H1 (cell line): ENCODE measurements at regions of chr3 and their contacts with region 1.

Region 1: DNA sequence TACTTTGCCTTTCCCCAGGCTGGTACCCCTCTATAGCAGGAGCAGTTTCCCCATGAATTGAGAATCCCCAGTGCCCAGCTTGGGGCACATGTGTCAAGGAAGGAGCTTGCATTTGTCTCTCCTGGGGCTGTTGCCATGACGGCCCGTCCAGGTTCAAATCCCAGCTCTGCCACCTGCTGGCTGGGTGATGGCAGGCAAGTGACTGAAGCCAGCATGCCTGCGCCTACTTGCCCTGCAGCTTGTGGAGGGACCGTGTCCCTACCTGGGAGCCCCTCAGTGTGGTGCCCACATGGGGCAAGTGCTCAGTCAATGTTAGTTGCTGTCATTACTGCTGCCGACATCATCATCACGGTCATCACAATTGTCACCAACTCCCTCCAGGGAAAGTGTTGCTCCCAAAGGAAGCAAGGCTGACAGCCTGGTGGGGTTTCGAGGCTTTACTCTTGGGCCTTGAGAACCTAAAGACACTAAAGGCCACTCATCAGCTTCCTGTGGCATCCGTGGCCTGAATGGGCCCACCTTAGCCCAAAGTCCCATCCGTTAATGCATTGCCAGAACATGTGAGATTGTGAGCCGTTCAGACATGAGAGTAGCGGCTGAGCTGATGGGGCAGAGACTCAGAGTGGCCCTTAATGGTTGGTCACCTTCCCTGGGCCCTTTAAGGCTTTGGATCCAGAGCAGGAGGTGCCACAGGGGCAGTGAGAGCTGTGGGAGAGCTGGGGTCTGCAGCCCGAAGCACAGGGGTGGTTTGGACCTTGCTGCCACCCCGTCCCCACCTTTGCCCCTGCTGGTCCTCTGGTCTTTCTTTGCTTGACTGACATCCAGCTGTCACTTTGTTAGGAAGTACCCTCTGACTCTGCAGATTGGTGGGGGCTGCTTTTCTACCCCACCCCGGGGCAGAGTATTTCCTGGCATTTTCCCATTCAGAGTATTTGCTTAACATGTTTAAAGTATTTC is 144.3 kb downstream of the DNAJB8 start:
- DNase-seq: peak; percentile 17 to 85
- H3K4me3 ChIP-seq: no peak overlapping the region
- H3K27ac ChIP-seq: no peak overlapping the region
- H3K4me1 ChIP-seq: peaks cover 0 to 4% (median 0%) of the 10 kb centered on the region in 4 experiments; a peak in 2 of 7 replicates
- H3K27me3 ChIP-seq: no peaks in the 10 kb centered on the region
- CTCF ChIP-seq: peak in 2 of 3 experiments; percentile 89 to 90; a peak in 3 of 4 replicates
- EP300 ChIP-seq: no peak
- POLR2A ChIP-seq: no peak
- RAD21 ChIP-seq: peak; percentile 76 to 86

Region 2: DNA sequence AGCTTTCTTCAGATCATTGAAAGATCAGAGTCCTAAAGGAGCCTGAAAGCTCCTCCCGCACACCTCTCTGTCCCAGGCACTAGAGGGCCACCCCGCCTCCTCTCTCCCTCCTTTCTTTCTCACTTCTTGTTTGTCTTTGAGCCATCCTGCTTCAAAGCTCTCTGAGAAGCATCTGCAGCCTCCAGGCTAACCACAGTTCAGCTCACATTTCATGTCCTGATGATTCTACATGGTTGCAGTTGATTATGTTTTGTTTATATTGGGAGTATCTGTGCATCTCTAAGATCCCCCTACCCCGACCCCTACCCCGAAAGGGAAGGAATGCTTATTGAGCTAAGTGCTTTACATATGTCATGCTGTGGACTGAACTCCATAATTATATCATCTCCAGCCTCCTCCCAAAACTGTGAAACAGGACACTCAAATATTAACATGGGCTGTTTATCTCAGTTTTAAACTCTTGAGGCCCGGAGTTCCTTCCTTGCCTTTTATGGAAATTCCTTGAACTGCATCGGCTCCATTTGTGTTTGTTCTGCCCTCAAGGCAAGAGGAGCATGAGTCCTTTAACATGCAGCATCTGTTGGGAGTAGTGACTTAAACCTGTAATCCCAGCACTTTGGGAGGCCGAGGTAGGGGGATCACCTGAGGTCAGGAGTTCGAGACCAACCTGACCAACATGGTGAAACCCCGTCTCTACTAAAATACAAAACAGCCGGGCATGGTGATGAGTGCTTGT is 531.0 kb before region 1 on chr3:
- CTCF ChIA-PET with region 1: no interaction called
- POLR2A ChIA-PET with region 1: no interaction called
- DNase-seq: no peak
- H3K4me3 ChIP-seq: no peak overlapping the region
- H3K27ac ChIP-seq: no peak overlapping the region
- H3K4me1 ChIP-seq: no peaks in the 10 kb centered on the region; a peak in 1 of 7 replicates
- H3K27me3 ChIP-seq: no peaks in the 10 kb centered on the region
- CTCF ChIP-seq: peak; percentile 37 to 49 (median 48)
- EP300 ChIP-seq: no peak
- POLR2A ChIP-seq: no peak
- RAD21 ChIP-seq: peak; percentile 48 to 61

Region 3: DNA sequence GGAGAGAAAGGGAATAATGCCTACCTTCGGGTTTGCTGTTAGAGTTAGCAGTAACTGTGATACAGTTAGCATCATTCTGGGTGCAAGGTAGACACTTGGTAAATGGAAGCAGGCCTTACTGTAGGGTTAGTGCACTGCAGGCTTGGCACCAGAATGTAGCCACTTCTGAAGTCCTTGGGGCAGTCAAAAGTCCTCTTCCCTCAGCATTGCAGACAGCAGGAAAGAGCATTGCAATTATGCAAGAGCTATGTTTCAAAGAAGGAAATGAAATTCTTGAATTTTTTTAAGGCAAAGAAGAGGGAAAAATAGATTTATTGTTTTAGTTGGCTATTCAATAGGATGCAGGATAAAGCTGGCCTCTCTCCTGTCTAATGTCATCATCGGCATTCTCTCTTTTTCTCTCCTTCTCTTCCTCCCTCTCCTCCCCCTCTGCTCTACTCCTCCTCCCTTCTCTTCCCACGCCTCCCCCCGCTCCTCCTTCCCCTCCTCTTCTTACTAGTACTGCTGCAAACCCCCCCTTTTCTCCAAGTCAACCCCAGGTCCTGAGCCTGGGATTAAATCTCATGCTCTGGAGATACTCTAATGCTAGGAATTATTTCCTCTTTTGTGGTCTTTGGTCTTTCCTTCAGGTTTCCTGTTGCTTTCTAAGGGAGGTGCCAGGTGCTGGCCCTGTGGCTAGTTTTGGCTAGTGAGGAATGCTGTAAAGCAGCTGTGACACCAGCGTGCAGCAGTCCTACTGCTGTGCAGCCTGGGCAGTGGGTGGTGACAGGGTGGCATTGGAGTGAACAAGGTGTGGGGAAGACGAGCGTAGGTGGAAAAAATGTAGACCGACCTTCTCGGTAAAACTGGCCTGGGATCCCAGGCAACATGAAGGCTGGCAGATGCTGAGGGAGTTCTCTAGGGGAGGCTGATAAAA is 147.4 kb before region 1 on chr3:
- CTCF ChIA-PET with region 1: interaction called, 11 read pairs
- POLR2A ChIA-PET with region 1: interaction called, 3 read pairs
- DNase-seq: no peak
- H3K4me3 ChIP-seq: no peak overlapping the region
- H3K27ac ChIP-seq: no peak overlapping the region
- H3K4me1 ChIP-seq: peaks cover 3 to 16% (median 6%) of the 10 kb centered on the region in 4 experiments; a peak in 6 of 7 replicates
- H3K27me3 ChIP-seq: no peaks in the 10 kb centered on the region
- CTCF ChIP-seq: no peak
- EP300 ChIP-seq: no peak
- POLR2A ChIP-seq: no peak
- RAD21 ChIP-seq: no peak

Region 4: DNA sequence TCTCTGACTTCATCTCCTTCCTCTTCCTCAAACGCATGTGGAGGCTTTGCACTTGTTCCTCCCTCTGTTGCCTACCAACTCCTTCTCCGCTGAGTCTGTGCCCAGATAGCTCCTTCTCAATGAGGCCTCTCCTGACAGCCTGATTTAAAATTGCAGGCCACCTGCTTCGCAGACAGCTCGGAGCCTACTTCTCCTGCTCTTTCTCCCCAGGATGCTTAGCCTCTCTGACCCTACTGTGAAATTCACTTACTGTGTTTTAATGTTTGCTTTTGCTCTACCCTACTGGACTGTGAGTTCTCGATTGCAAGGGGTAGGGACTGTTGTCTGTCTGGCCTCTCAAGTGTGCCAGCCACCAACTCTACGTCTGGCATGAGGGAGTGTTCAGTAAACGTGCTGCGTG is 85.7 kb before region 1 on chr3:
- CTCF ChIA-PET with region 1: interaction called, 18 read pairs
- POLR2A ChIA-PET with region 1: no interaction called
- DNase-seq: peak in 1 of 2 experiments; percentile 22
- H3K4me3 ChIP-seq: no peak overlapping the region
- H3K27ac ChIP-seq: no peak overlapping the region
- H3K4me1 ChIP-seq: peaks cover 0 to 5% (median under 1%) of the 10 kb centered on the region in 4 experiments; a peak in 3 of 7 replicates
- H3K27me3 ChIP-seq: no peaks in the 10 kb centered on the region
- CTCF ChIP-seq: no peak
- EP300 ChIP-seq: no peak
- POLR2A ChIP-seq: no peak
- RAD21 ChIP-seq: no peak

Region 5: DNA sequence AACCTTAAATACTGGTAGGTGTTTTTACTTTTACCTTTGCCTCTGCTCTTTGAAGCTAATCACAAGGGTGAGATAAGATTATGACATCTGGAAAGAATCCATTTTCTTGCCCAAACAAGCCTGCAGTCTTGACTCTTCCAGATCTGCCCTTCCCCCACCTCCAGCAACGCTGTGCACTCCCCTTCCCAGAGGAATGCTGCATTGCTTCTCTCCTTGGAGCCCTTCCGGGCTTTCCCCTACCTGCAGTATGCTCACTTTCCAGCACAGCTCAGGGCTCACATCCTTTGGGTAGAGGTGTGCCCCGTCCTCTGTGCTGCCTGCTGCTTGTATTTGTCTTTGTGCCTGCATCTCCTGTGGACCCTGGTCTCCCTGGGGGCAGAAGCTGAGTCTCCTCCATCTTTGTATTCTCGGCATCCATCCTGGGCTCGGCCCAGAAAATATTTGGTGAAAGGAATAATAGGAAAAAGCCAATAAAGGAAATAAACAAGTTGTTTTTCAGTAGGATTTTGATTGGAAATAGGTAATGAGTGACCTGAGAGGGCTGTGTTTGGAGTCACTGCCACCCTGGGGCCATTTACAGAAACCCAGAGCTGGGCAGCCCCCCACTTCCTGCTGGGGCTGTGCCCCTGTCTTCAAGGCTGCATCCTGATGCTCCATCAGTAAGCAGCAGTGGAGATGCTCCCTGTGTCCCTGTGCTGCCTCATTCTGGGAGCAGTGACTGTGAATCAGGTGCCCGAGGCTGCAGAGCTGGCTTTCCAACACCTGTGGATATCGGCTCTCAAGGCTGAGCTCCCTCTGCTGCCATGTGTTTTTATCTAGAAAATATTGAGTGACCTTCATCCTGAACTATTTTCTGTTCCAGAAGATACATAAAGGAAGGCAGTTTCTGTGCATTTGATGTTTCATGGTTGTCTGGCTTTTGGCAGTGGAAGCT is 51.5 kb before region 1 on chr3:
- CTCF ChIA-PET with region 1: interaction called, 48 read pairs
- POLR2A ChIA-PET with region 1: no interaction called
- DNase-seq: peak in 1 of 2 experiments; percentile 50
- H3K4me3 ChIP-seq: peak overlapping the region in 1 of 4 experiments; percentile 14; a peak in 1 of 8 replicates
- H3K27ac ChIP-seq: no peak overlapping the region
- H3K4me1 ChIP-seq: peaks cover 6 to 20% (median 13%) of the 10 kb centered on the region in 4 experiments
- H3K27me3 ChIP-seq: no peaks in the 10 kb centered on the region
- CTCF ChIP-seq: no peak
- EP300 ChIP-seq: no peak
- POLR2A ChIP-seq: no peak
- RAD21 ChIP-seq: no peak

Region 6: DNA sequence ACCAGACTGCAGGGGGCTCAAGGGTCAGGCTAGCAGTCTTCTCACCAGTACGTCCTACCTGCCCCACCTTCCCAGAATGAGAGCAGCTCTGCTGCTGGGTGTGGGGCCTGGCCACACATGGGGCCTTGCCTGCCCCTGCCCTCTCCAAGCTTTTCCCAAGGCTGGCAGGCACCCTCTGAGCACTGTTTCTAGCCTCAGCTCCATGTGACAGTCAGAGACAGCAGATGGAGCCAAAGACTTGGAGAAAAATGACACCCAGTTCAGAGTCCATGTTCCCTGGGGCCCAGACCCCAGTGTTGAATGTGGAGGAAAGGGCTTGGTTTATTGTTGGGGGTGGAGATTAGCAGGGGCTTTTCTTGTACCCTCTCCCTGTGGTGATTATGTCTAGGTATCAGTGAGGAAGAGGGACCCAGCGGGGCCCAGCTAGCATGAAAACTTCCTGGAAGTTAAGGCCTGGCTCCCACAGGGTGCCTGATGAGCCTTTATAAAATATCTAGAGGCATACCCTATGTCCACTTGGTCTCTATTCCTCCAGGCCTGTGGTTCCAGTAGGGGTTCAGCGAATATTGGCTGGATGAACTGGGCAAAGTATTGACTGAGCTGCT is 15.2 kb before region 1 on chr3:
- CTCF ChIA-PET with region 1: interaction called, 58 read pairs
- POLR2A ChIA-PET with region 1: interaction called, 3 read pairs
- DNase-seq: peak in 1 of 2 experiments; percentile 43
- H3K4me3 ChIP-seq: no peak overlapping the region
- H3K27ac ChIP-seq: no peak overlapping the region
- H3K4me1 ChIP-seq: no peaks in the 10 kb centered on the region
- H3K27me3 ChIP-seq: no peaks in the 10 kb centered on the region
- CTCF ChIP-seq: peak in 2 of 3 experiments; percentile 12 to 17; a peak in 2 of 4 replicates
- EP300 ChIP-seq: no peak
- POLR2A ChIP-seq: no peak
- RAD21 ChIP-seq: peak; percentile 48 to 63

Region 7: GRCh38 chr3:128353991-128354687 is 31.8 kb after region 1 on chr3:
- CTCF ChIA-PET with region 1: interaction called, 13 read pairs
- POLR2A ChIA-PET with region 1: no interaction called
- DNase-seq: no peak
- H3K4me3 ChIP-seq: no peak overlapping the region
- H3K27ac ChIP-seq: no peak overlapping the region
- H3K4me1 ChIP-seq: peaks cover 2 to 4% (median 3%) of the 10 kb centered on the region in 4 experiments
- H3K27me3 ChIP-seq: no peaks in the 10 kb centered on the region
- CTCF ChIP-seq: no peak
- EP300 ChIP-seq: no peak
- POLR2A ChIP-seq: no peak
- RAD21 ChIP-seq: no peak

Region 8: GRCh38 chr3:128426128-128426921 is 104.0 kb after region 1 on chr3:
- CTCF ChIA-PET with region 1: interaction called, 11 read pairs
- POLR2A ChIA-PET with region 1: no interaction called
- DNase-seq: peak in 1 of 2 experiments; percentile 90
- H3K4me3 ChIP-seq: peak overlapping the region in 2 of 4 experiments; percentile 10 to 48; a peak in 4 of 8 replicates
- H3K27ac ChIP-seq: no peak overlapping the region
- H3K4me1 ChIP-seq: peaks cover 0 to 23% (median 11%) of the 10 kb centered on the region in 4 experiments; a peak in 5 of 7 replicates
- H3K27me3 ChIP-seq: peaks cover 6 to 64% (median 52%) of the 10 kb centered on the region in 4 experiments
- CTCF ChIP-seq: peak in 2 of 3 experiments; percentile 96 to 97; a peak in 3 of 4 replicates
- EP300 ChIP-seq: no peak
- POLR2A ChIP-seq: no peak
- RAD21 ChIP-seq: peak; percentile 76 to 96